Posterior vena cava (tissue), 2 donors: ENCODE measurements at regions of chr7 and their contacts with region 1.

Region 1: DNA sequence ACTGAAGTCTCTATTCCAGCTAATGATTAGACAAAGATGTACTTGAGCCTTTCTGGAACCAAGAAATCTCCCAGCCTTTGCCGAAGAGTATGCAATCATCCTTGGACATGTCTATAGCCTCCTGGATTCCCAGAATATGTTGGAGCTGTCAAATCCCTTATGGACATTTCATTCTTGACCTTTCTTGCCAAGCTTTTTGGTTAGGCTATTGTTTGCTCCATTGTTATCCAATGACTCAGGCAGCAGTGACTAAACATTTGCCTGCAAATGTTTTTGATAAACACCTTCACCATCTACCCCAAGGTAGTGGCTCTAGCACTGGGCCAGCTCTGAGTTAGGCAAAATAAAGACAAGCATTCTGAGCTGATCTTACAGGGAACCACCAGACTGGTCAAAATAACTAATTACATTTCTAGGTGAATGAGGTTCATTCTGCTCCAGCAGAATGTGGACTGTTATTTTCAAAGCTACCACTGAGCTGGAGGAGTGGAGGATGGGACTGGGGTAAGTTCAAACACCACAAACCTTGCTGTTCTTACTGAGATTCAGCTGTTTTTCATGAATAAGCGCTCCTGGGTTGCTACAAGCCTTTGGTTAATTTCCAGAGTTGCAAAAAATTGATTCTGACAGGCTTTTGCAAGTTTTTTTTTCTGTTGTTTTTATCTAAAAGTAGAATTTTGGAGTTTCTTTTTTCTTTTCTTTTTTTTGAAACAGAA is 81.0 kb downstream of the TMEM270 start:
- DNase-seq: no peak

Region 2: DNA sequence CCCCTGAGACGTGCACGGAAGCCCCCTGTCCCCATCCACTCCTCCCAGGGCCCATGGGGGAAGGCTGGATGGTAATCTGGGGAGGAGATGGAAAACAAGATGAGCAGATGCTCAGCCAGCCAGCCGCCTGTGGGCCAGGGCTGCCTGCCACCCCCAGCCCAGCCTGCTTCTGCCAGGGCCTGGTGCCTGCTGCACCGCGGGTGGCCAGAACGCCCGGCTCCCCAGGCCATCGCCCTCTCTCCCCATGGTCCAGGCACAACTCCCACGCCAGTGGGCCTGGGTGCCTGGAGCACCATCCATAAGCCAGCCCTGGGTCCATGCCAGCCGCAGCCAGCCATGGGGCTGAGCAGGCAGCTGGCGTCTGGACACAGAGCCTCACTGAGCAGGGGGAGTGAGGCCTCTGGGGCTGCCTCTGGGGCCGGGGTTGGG is 28.8 kb after region 1 on chr7:
- intact Hi-C with region 1: loop called in 1 of 2 experiments (anchors 1 kb)
- DNase-seq: peak; percentile 78

Region 3: DNA sequence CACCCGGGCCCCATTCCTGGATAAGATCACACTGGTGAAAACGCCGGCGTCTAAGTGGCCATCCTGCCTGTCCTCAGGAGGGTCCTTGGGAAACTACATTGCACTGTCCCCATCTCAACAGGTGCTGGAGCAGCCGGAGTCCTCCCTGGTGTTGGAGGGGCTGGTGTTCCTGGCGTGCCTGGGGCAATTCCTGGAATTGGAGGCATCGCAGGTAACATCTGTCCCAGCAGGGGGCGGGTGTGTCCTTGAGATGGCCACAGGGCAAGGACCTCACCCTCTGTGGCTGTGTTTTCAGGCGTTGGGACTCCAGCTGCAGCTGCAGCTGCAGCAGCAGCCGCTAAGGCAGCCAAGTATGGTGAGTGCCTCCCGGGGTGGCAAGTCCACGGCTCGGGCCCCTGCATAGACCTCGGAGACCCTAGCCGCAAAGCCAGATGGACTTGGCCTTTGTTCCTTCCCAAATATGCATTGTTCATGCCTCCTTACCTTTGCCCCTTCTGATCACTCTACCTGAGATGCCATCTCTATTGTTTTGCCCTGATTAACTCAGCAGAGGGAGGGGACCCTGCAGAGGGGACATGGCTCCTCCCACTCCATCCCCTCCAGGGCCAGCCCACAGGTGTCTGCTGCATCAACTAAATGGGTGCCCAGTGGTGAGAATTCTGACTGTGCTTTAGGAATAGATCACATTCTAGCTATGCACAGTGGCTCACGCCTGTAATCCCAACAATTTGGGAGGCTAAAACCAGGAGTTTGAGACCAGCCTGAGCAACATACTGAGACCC is 109.8 kb after region 1 on chr7:
- intact Hi-C with region 1: no loop called
- DNase-seq: peak; percentile 80